Right cardiac atrium (tissue), 5 donors: ENCODE measurements at regions of chr4 and their contacts with region 1.

Region 1: GRCh38 chr4:54322818-54323417 is 93.8 kb downstream of the PDGFRA start:
- DNase-seq: peak; percentile 47 to 77 (median 58)
- ATAC-seq: peak; percentile 63 to 78
- H3K4me3 ChIP-seq: no peak overlapping the region
- H3K27ac ChIP-seq: no peak overlapping the region
- H3K4me1 ChIP-seq: no peaks in the 10 kb centered on the region
- H3K27me3 ChIP-seq: no peaks in the 10 kb centered on the region

Region 2: GRCh38 chr4:54440394-54441136 is 117.6 kb after region 1 on chr4:
- intact Hi-C with region 1: loop called in 2 of 4 experiments (anchors 5 kb)
- DNase-seq: no peak
- ATAC-seq: no peak
- H3K4me3 ChIP-seq: peak overlapping the region; percentile 45
- H3K27ac ChIP-seq: no peak overlapping the region
- H3K4me1 ChIP-seq: no peaks in the 10 kb centered on the region
- H3K27me3 ChIP-seq: no peaks in the 10 kb centered on the region

Region 3: DNA sequence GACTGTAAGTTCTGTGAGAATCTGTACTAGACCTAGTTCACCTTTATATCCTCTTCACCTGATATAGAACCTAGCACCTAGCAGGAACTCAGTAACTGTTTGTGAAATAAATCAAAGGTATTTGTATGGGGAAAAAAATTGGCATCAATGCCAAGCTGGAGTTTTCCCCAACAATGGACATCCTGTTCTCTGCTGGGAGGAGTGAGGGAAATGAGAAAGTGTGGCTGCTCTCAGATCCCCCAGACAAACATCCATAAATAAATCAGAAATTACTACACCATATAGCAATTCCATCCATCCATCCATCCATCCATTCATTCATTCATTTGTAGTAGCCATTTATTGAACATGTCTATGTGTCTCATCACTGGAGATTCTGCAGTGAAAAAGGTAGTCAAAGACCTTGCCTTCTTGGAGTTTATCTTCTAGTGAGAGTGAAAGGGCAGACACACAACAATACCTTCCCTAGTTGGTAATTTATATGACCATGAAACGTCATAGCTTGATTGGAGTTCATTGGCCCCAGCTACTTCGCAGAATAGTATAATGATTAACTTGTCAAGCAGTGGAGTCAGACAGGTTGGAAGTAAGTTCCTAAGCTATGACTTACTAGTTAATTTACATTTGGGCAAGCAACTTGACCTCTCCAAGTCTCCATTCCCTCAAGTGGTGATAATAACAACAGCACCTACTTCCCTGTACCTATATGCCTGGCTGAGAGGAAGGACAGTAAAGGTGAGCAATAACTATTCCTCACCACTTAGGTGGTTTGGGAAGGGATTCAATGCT is 236.2 kb after region 1 on chr4:
- intact Hi-C with region 1: no loop called
- DNase-seq: no peak
- ATAC-seq: no peak
- H3K4me3 ChIP-seq: no peak overlapping the region
- H3K27ac ChIP-seq: no peak overlapping the region
- H3K4me1 ChIP-seq: no peaks in the 10 kb centered on the region
- H3K27me3 ChIP-seq: no peaks in the 10 kb centered on the region

Region 4: DNA sequence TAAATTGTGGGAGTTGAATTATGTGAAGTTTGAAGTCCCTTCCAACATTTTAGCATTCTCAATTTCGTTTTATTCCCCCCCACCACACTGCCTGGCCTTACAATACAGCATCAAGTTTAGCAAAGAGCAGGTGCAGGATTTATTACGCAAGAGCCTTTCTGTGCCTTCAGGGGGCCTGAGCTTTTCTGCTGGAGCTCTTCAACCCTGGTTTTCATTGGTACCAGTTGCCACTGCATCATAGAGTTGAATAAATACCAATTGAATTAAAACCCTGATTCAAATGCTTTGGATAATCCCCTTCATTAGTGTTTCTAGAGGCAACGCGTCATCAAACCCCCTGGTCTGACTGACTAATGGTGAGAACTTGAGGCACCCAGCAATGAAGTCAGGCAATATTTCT is 291.2 kb after region 1 on chr4:
- intact Hi-C with region 1: no loop called
- DNase-seq: no peak
- ATAC-seq: no peak
- H3K4me3 ChIP-seq: no peak overlapping the region
- H3K27ac ChIP-seq: no peak overlapping the region
- H3K4me1 ChIP-seq: no peaks in the 10 kb centered on the region
- H3K27me3 ChIP-seq: no peaks in the 10 kb centered on the region

Region 5: GRCh38 chr4:54941994-54942552 is 619.2 kb after region 1 on chr4:
- intact Hi-C with region 1: loop called in 1 of 4 experiments (anchors 10 kb)
- DNase-seq: peak in 1 of 3 donors; percentile 12
- ATAC-seq: peak in 1 of 2 donors; percentile 73
- H3K4me3 ChIP-seq: no peak overlapping the region
- H3K27ac ChIP-seq: no peak overlapping the region
- H3K4me1 ChIP-seq: no peaks in the 10 kb centered on the region
- H3K27me3 ChIP-seq: no peaks in the 10 kb centered on the region

Region 6: DNA sequence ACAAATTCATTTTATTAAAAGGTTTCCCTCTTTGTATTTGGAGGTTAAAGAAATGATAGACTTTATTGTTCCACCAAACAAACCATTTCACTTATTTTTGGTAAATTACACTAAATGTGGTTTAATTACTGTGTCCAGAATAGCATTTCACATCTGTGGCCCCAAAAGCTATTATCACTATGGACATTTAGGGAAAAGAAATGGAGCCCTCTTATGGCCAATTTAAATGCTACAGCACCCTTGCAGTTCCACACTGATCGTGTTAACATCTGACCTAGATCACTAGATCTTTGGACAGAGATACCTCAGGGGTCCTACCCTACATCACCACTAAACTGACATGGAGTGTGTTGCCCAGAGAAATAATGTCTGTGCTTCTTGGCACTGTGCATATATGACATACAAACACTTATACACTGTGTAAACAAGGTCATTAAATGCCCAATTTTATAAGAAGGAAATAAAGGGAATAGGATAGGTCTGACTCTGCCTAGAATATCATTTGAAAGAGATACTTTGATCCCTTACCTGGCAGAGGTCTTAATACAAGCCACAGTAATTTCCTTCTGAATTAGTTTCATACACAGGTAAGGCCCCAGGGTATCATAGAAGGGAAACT is 638.5 kb after region 1 on chr4:
- intact Hi-C with region 1: loop called in 3 of 4 experiments (anchors 5 to 10 kb)
- DNase-seq: no peak
- ATAC-seq: peak; percentile 43 to 46
- H3K4me3 ChIP-seq: no peak overlapping the region
- H3K27ac ChIP-seq: no peak overlapping the region
- H3K4me1 ChIP-seq: no peaks in the 10 kb centered on the region
- H3K27me3 ChIP-seq: no peaks in the 10 kb centered on the region